Cardiac septum (tissue), 1 donor: ENCODE measurements at regions of chr4 and their contacts with region 1.

Region 1: GRCh38 chr4:128287871-128288688 is 467 bp upstream of the PGRMC2 start:
- DNase-seq: peak; percentile 100

Region 2: DNA sequence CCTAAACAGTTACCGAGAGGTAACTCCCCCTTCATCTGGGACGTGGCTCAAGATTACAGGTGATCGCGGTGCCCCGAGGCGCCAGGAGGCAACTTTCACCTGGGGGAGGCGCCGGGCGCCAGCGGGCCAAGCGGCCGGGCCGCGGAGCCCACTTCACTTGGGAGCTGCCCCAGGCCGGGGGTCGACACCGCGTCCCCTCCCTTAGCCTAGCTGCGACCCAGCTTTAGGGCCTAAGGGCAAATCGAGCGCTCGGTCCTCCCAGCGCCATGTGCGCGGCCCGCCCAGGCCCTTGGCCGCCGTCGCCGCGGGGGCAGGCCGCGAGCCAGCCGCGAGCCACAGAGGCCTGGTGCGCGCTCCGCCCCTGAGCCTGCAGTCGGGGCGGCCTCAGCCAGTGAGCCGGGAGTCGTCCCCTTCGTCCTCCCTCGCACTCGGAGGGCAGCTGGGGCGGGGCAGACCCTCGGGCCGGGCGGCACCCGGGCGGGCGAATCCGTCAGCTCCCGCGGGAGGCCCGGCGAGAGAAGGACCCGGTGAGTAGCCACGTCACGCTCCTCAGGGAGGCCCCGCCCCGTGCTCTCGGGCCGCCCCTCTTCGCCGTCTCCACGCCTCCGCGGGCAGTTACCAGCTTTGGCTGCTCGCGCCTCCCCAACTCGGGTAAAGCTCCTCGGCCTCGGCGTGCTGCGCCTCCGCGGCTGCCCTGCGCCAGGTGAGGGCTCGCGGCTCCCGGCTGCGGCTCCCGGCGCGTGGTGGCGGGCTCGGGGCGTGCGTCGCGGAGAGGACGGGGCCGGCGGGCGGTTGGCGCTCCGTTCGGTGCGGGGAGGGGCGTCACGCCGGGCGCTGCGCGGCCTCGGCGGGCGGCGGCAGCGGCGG is 227.1 kb before region 1 on chr4 and contains the start of gene LARP1B:
- intact Hi-C with region 1: loop called (anchors 5 kb)
- DNase-seq: peak; percentile 99
- total RNA-seq, gene LARP1B: 24.2 TPM

Region 3: GRCh38 chr4:128308986-128309385 is 20.9 kb after region 1 on chr4:
- intact Hi-C with region 1: loop called (anchors 2 kb)
- DNase-seq: no peak

Region 4: DNA sequence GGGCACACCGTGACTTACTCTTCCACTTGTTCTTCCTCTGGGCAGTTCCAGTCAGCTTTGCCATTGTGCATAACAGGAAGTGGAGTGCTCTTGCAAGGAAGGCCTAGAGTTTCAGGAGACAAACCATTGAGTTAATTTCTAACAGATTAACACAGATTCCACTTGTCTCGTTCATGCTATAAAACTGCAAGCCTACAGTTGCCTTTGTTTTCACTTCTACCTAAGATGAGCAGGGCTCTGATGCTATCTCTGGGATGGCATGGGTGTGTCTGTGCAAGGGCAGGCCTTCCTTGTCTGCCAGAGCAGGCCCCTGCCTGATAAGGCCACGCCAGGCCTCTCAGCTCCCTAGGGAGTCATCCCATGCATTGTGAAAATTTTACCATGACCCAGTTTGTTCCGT is 67.2 kb after region 1 on chr4:
- intact Hi-C with region 1: loop called (anchors 5 kb)
- DNase-seq: no peak

Region 5: GRCh38 chr4:128386761-128387599 is 98.9 kb after region 1 on chr4:
- intact Hi-C with region 1: loop called (anchors 2 kb)
- DNase-seq: peak; percentile 91

Region 6: DNA sequence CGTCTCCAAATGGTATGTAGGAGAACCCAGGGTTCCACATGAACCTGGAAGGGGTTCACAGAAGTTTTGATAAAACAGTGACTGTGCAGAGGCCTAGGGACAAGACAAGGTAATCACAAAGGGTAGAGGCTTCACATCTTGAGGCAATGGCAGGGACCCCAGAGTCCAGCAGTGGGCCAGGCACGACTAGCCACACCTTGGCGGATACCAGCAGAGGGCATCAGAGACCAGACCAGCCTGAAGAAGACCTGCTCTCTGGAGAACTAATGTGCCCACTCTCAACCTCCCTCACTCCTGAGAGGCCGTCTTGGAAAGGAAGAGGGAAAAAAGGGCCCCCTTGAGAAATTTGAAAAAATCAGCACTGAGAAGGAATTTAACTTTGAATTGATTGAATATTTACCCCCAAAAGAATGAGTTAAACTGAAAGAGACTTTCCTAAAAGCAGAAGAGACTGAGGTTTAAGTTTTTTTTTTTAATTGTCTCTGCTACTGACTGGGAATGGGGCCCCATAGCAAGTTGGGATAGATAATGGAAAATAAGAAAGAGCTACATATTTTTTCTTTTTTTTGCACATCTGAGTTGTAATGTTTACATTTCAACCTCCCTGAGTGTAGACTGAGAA is 277.6 kb after region 1 on chr4:
- intact Hi-C with region 1: loop called (anchors 10 kb)
- DNase-seq: no peak